Activated CD4-positive, alpha-beta memory T cell treated with anti-CD3 and anti-CD28 coated beads for 36 hours (primary cell): ENCODE measurements at regions of chr13 and their contacts with region 1.

Region 1: GRCh38 chr13:112942689-112943308 is 26.2 kb upstream of the MCF2L start:
- DNase-seq: peak; percentile 97
- H3K4me3 Mint-ChIP-seq: peak overlapping the region; percentile 83
- H3K27ac Mint-ChIP-seq: no peak overlapping the region
- H3K4me1 Mint-ChIP-seq: peaks cover 6% of the 10 kb centered on the region
- H3K27me3 Mint-ChIP-seq: peaks cover 15% of the 10 kb centered on the region

Region 2: DNA sequence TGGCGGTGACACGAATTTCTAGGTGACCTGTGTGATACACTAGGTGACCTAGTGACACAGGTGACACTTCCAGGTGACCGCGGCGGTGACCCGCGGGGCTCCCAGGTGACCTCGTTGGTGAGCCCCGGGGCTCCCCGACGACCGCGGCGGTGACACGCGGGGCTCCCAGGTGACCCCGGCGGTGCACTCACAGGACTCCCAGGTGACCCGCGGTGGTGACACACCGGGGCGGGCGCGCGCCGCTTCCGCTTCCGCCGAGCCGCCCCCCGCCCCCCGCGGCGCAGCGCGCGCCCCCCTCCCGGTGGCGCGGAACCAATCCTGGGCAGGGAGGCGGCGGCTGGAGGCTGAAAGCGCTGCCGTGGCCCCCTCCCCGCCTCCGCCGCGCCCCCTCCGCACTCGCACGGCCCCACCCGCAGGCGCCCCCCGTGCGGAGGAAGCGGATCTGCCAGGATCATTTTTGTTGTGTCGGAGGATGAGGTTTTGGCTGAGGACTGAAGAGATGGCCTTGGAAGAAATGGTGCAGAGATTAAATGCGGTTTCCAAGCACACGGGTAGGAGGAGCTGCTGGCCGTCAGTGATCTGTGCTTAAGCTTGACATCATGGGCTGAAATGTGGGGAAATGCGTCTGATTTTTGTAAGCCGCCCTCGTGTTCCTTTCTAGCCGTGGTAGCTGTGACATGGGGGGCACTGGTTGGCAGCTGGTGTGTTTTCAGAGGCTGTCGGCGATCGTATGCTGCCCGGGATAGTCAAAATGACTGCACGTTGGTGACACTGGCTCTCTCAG is 26.3 kb after region 1 on chr13 and contains the start of gene MCF2L:
- CTCF ChIA-PET with region 1: interaction called, 10 read pairs
- POLR2A ChIA-PET with region 1: no interaction called
- intact Hi-C with region 1: loop called (anchors 1 kb)
- DNase-seq: peak; percentile 75
- H3K4me3 Mint-ChIP-seq: peak within 1 kb of the TSS; percentile 82
- H3K27ac Mint-ChIP-seq: peak within 1 kb of the TSS; percentile 75
- H3K4me1 Mint-ChIP-seq: peaks cover 18% of the 10 kb centered on the region
- H3K27me3 Mint-ChIP-seq: no peaks in the 10 kb centered on the region
- total RNA-seq, gene MCF2L: 7.1 to 8.0 TPM

Region 3: DNA sequence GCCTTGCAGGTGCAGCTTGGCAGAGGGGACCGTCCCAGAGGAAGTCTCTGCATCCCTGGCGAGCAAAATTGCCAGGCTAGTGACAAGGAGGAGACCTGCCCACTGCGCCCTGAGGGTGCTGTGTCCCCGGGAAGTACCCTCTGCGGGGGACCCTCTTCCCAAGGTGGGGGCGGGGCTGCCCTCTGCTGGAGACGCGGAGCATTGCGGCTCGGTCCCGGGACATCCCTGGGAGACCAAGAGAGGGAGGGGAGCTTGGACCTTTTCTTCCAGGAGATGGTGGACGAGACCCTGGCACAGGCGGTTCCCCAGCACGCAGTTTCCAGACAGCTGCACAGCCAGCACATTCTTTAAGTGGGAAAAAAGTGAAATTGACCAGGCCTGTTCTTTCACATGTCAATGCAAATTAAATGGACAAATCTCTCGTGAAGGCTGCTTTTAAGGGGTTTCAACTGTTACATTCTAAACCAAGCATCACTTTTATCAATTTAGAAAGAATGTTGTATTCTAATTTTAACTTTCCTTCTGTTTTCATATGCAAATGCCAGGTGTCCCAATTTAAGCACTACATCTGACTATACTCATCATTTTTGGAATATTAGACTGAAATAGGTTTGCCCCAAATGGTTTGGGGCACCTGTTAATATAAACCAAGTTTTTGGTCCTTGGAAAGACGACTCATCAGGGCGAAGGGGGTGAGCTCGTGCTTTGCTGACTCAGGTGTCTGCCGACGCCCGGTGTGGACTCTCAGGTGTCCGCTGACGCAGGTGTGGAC is 86.9 kb after region 1 on chr13:
- CTCF ChIA-PET with region 1: interaction called, 26 read pairs
- POLR2A ChIA-PET with region 1: no interaction called
- intact Hi-C with region 1: loop called (anchors 1 kb)
- DNase-seq: peak; percentile 65
- H3K4me3 Mint-ChIP-seq: no peak overlapping the region
- H3K27ac Mint-ChIP-seq: no peak overlapping the region
- H3K4me1 Mint-ChIP-seq: no peaks in the 10 kb centered on the region
- H3K27me3 Mint-ChIP-seq: no peaks in the 10 kb centered on the region

Region 4: DNA sequence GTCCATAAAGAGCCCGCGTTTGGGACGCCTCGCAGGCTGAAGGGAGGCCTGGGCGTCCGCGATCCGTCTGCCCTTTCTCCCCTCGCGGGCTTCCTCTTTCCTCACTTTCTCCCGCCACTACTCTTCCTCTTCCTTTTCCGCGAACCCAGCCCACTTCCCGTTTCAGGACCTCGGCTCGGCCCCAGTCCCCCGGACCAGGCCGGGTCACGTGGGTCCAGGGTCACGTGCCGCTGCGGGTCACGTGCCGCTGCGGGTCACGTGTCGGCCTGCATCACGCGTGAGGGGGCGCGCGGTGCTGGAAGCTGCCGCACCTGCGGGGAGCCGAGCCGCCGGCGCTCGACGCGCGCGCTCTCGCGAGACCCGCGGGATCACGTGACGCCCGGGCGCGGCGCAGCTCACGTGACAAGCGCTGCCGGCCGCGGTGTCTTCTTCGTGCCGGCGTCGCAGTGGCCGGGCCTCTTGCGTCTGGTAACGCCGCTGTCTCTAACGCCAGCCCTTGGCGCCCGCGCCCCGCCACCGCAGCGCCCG is 354.1 kb after region 1 on chr13 and contains the start of gene LAMP1:
- CTCF ChIA-PET with region 1: interaction called, 7 read pairs
- POLR2A ChIA-PET with region 1: no interaction called
- intact Hi-C with region 1: loop called (anchors 1 kb)
- DNase-seq: peak; percentile 98
- H3K4me3 Mint-ChIP-seq: peak within 1 kb of the TSS; percentile 98
- H3K27ac Mint-ChIP-seq: peak within 1 kb of the TSS; percentile 98
- H3K4me1 Mint-ChIP-seq: peaks cover 35% of the 10 kb centered on the region
- H3K27me3 Mint-ChIP-seq: peaks cover 12% of the 10 kb centered on the region
- total RNA-seq, gene LAMP1: 45.9 to 46.8 TPM

Region 5: GRCh38 chr13:113393563-113394338 is 451.0 kb after region 1 on chr13:
- CTCF ChIA-PET with region 1: interaction called, 16 read pairs
- POLR2A ChIA-PET with region 1: no interaction called
- intact Hi-C with region 1: loop called (anchors 1 kb)
- DNase-seq: peak; percentile 88
- H3K4me3 Mint-ChIP-seq: peak overlapping the region; percentile 90
- H3K27ac Mint-ChIP-seq: no peak overlapping the region
- H3K4me1 Mint-ChIP-seq: peaks cover 4% of the 10 kb centered on the region
- H3K27me3 Mint-ChIP-seq: no peaks in the 10 kb centered on the region

Region 6: GRCh38 chr13:113562085-113562749 is 619.4 kb after region 1 on chr13:
- CTCF ChIA-PET with region 1: interaction called, 5 read pairs
- POLR2A ChIA-PET with region 1: no interaction called
- intact Hi-C with region 1: loop called (anchors 10 kb)
- DNase-seq: peak; percentile 56
- H3K4me3 Mint-ChIP-seq: no peak overlapping the region
- H3K27ac Mint-ChIP-seq: no peak overlapping the region
- H3K4me1 Mint-ChIP-seq: no peaks in the 10 kb centered on the region
- H3K27me3 Mint-ChIP-seq: peaks cover 8% of the 10 kb centered on the region